Activated naive CD4-positive, alpha-beta T cell treated with anti-CD3 and anti-CD28 coated beads for 36 hours (primary cell): ENCODE measurements at regions of chr2 and their contacts with region 1.

Region 1: GRCh38 chr2:37414470-37414949 is 70.1 kb downstream of the QPCT start:
- DNase-seq: no peak
- H3K4me3 Mint-ChIP-seq: no peak overlapping the region
- H3K27ac Mint-ChIP-seq: no peak overlapping the region
- H3K4me1 Mint-ChIP-seq: peaks cover 3% of the 10 kb centered on the region
- H3K27me3 Mint-ChIP-seq: no peaks in the 10 kb centered on the region

Region 2: DNA sequence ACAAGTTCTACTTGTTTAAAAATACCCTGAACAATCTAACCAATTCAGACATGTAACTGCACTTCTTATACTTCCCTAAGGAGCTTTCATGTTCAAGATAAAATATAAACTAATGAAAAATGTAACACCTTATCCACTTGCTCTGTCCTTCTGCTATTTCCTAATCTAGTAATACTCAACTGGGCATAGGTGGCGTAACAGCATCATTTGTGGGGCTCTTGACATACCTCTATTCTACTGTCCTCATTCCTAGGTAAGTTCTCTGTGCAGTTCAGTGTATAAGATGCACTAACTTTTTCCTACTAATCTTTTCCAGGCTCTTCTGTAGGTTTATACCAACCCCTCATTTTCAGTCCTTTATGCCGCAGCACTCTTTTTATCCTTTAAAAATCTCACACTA is 126.5 kb before region 1 on chr2:
- CTCF ChIA-PET with region 1: no interaction called
- intact Hi-C with region 1: loop called (anchors 5 kb)
- DNase-seq: peak; percentile 59
- H3K4me3 Mint-ChIP-seq: no peak overlapping the region
- H3K27ac Mint-ChIP-seq: no peak overlapping the region
- H3K4me1 Mint-ChIP-seq: no peaks in the 10 kb centered on the region
- H3K27me3 Mint-ChIP-seq: no peaks in the 10 kb centered on the region

Region 3: GRCh38 chr2:37529830-37530415 is 115.4 kb after region 1 on chr2:
- CTCF ChIA-PET with region 1: no interaction called
- intact Hi-C with region 1: loop called (anchors 5 kb)
- DNase-seq: no peak
- H3K4me3 Mint-ChIP-seq: no peak overlapping the region
- H3K27ac Mint-ChIP-seq: no peak overlapping the region
- H3K4me1 Mint-ChIP-seq: no peaks in the 10 kb centered on the region
- H3K27me3 Mint-ChIP-seq: no peaks in the 10 kb centered on the region

Region 4: GRCh38 chr2:37809525-37809924 is 395.0 kb after region 1 on chr2:
- CTCF ChIA-PET with region 1: no interaction called
- intact Hi-C with region 1: loop called (anchors 1 kb)
- DNase-seq: peak; percentile 29
- H3K4me3 Mint-ChIP-seq: no peak overlapping the region
- H3K27ac Mint-ChIP-seq: no peak overlapping the region
- H3K4me1 Mint-ChIP-seq: peaks cover 6% of the 10 kb centered on the region
- H3K27me3 Mint-ChIP-seq: peaks cover 2% of the 10 kb centered on the region

Region 5: GRCh38 chr2:38274286-38275276 is 860.1 kb after region 1 on chr2:
- CTCF ChIA-PET with region 1: no interaction called
- intact Hi-C with region 1: no loop called
- DNase-seq: peak; percentile 53
- H3K4me3 Mint-ChIP-seq: no peak overlapping the region
- H3K27ac Mint-ChIP-seq: no peak overlapping the region
- H3K4me1 Mint-ChIP-seq: peaks cover 2% of the 10 kb centered on the region
- H3K27me3 Mint-ChIP-seq: no peaks in the 10 kb centered on the region